PC-3 (cell line): ENCODE measurements at regions of chr15 and their contacts with region 1.

Region 1: GRCh38 chr15:74146277-74146800 is 16.0 kb downstream of the ISLR2 start:
- DNase-seq: no peak
- ATAC-seq: no peak
- H3K4me3 ChIP-seq: no peak overlapping the region
- H3K27ac ChIP-seq: no peak overlapping the region
- H3K4me1 ChIP-seq: peaks cover 6% of the 10 kb centered on the region; the same call in 1 of the 2 replicates
- H3K27me3 ChIP-seq: peaks cover 4% of the 10 kb centered on the region; the same call in 1 of the 2 replicates
- CTCF ChIP-seq: no peak

Region 2: DNA sequence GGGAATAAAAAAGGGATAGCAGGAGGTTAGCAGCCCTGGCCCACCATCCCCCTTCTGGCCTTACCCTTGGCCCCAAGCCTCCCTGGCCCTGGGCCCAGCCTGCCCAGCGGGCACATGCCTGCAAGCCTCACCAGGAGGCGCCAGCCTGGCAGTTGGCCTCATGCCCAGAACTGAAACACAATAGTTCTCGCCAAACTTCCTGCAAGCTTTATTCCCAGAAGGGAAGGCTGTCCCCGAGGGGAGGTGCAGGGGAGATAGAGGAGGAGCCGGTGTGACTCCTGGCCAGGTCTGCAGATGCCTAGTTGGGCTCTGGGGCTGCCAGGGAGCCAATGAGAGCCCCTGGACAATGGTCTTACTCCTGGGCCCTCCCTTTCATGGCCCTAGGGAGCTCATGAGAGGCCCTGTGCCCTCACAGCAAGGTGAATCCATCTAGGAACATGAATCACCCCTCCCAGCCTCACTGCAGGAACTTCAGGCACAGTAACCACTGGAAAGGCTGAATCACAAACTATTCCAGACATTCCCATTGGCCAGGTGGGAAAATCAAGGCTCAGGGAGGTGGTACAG is 93.7 kb after region 1 on chr15:
- CTCF ChIA-PET with region 1: interaction called, 14 read pairs
- POLR2A ChIA-PET with region 1: no interaction called
- intact Hi-C with region 1: no loop called
- DNase-seq: peak; percentile 96
- ATAC-seq: peak; percentile 81
- H3K4me3 ChIP-seq: no peak overlapping the region
- H3K27ac ChIP-seq: peak overlapping the region; percentile 56
- H3K4me1 ChIP-seq: peaks cover 29% of the 10 kb centered on the region
- H3K27me3 ChIP-seq: no peaks in the 10 kb centered on the region
- CTCF ChIP-seq: peak; percentile 68

Region 3: GRCh38 chr15:74291101-74292071 is 145.0 kb after region 1 on chr15:
- CTCF ChIA-PET with region 1: no interaction called
- POLR2A ChIA-PET with region 1: no interaction called
- intact Hi-C with region 1: no loop called
- DNase-seq: peak; percentile 67
- ATAC-seq: peak; percentile 49; the same call in 1 of the 2 replicates
- H3K4me3 ChIP-seq: no peak overlapping the region
- H3K27ac ChIP-seq: no peak overlapping the region
- H3K4me1 ChIP-seq: no peaks in the 10 kb centered on the region
- H3K27me3 ChIP-seq: peaks cover 17% of the 10 kb centered on the region; the same call in 1 of the 2 replicates
- CTCF ChIP-seq: no peak

Region 4: DNA sequence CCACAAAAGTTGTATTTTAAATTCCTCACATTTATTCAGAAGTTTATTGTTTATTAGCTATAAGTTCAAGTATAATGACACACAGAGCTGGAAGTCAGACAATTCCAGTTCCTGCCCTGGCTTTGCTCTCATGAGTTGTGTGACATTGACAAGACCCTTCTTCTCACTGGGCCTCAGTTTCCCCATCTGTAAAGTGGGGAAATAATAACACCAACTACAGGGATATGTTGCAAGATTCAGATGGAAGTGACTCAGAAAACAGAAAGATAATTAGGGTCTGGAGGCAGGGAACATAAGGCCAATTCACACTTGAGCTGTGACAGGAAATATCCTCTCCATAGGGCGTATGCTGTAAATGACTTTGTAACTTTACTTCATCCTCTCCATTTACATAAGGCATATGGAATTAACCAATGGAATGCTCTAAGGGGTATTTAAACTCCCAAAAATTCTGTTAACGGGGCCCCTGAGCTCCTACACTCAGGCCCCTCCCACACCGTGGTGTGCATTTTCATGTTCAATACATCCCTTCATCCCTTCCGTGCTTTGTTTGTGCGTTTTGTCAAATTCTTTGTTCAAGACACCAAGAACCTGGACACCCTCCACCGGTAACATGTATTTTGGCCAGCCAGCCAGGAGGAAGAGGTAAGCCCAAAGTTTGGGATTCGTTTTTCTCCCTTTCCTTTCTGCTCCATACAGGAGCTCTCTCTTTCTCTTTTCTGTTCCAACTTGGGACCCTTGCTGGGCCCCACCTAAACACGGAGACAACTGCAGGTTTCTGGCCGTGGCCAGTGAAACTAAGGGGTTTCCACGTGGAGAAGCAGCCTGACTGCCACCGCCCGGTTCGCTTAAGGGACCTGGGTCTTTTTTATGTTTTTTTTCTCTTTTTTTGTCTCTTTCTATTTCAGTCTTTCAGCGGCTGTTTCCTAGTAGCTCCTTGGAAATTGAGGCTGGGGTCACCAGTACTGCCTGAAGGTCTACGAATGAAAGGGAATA is 204.3 kb after region 1 on chr15:
- CTCF ChIA-PET with region 1: no interaction called
- POLR2A ChIA-PET with region 1: no interaction called
- intact Hi-C with region 1: no loop called
- DNase-seq: no peak
- ATAC-seq: no peak
- H3K4me3 ChIP-seq: no peak overlapping the region
- H3K27ac ChIP-seq: no peak overlapping the region
- H3K4me1 ChIP-seq: no peaks in the 10 kb centered on the region
- H3K27me3 ChIP-seq: no peaks in the 10 kb centered on the region
- CTCF ChIP-seq: no peak